ENCODE measurements at regions of chr11 and their contacts with region 1.

Region 1: GRCh38 chr11:43944761-43945311 is 2.4 kb downstream of the C11orf96 start:
- DNase-seq: no peak
- H3K4me3 ChIP-seq: no peak overlapping the region
- H3K27ac ChIP-seq: no peak overlapping the region
- H3K27me3 ChIP-seq: peaks cover 57% of the 10 kb centered on the region
- CTCF ChIP-seq: peak; percentile 78

Region 2: GRCh38 chr11:43830928-43831440 is 113.9 kb before region 1 on chr11:
- CTCF ChIA-PET with region 1: no interaction called
- POLR2A ChIA-PET with region 1: no interaction called
- DNase-seq: peak; percentile 98
- H3K4me3 ChIP-seq: no peak overlapping the region
- H3K27ac ChIP-seq: peak overlapping the region; percentile 77
- H3K27me3 ChIP-seq: no peaks in the 10 kb centered on the region
- CTCF ChIP-seq: no peak

Region 3: DNA sequence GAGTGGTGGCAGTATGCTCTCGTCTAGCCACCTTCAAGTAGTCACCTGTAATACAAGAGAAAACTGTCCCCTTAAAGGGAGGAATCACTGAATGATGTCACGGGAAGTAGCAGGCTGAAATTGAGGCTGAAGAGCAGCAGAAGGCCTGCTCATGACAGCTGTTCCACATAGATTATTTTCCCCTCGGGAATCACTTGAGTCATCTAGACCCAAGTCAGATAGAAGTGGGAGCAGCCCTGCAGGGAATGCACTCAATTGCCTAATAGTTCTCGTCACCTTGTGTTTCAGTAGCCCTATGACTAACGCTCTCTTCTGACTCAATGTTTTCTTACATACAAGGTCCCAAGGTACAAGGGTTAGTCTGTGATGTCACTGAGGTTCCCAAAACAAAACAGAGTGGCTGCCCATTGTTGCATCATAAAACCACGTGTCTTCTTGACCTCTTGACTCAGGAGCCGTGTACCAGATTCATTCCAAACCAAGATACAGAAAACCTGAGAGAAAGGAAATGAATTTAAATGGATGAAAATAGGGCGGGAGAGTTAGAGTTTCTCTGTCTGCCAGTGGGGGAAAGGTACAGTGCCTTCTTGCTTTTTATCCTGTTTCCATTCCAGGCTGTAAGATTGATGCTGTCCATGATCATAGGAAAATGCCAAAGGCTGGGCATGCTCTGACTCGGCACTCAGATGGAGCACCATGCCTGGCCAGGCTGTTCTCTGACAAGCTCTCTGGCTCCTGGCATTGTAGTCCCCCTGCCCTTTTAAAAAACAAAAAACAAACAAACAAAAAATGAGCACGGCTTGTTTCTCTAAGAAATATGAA is 24.0 kb before region 1 on chr11:
- CTCF ChIA-PET with region 1: interaction called, 15 read pairs
- POLR2A ChIA-PET with region 1: interaction called, 10 read pairs
- DNase-seq: peak; percentile 99
- H3K4me3 ChIP-seq: no peak overlapping the region
- H3K27ac ChIP-seq: peak overlapping the region; percentile 95
- H3K27me3 ChIP-seq: no peaks in the 10 kb centered on the region
- CTCF ChIP-seq: no peak

Region 4: GRCh38 chr11:43987384-43988039 is 42.7 kb after region 1 on chr11:
- CTCF ChIA-PET with region 1: interaction called, 10 read pairs
- POLR2A ChIA-PET with region 1: interaction called, 4 read pairs
- DNase-seq: no peak
- H3K4me3 ChIP-seq: peak overlapping the region; percentile 13; the same call in 1 of the 2 replicates
- H3K27ac ChIP-seq: peak overlapping the region; percentile 57
- H3K27me3 ChIP-seq: peaks cover 10% of the 10 kb centered on the region
- CTCF ChIP-seq: no peak

Region 5: GRCh38 chr11:44235765-44236201 is 290.9 kb after region 1 on chr11:
- CTCF ChIA-PET with region 1: no interaction called
- POLR2A ChIA-PET with region 1: no interaction called
- DNase-seq: no peak
- H3K4me3 ChIP-seq: no peak overlapping the region
- H3K27ac ChIP-seq: no peak overlapping the region
- H3K27me3 ChIP-seq: no peaks in the 10 kb centered on the region
- CTCF ChIP-seq: no peak